ENCODE measurements at regions of chr3 and their contacts with region 1.

Region 1: GRCh38 chr3:173553635-173554280 is 156.2 kb downstream of the NLGN1 start:
- H3K4me3 Mint-ChIP-seq: no peak overlapping the region
- H3K27ac Mint-ChIP-seq: no peak overlapping the region
- H3K4me1 Mint-ChIP-seq: no peaks in the 10 kb centered on the region
- H3K27me3 Mint-ChIP-seq: no peaks in the 10 kb centered on the region

Region 2: DNA sequence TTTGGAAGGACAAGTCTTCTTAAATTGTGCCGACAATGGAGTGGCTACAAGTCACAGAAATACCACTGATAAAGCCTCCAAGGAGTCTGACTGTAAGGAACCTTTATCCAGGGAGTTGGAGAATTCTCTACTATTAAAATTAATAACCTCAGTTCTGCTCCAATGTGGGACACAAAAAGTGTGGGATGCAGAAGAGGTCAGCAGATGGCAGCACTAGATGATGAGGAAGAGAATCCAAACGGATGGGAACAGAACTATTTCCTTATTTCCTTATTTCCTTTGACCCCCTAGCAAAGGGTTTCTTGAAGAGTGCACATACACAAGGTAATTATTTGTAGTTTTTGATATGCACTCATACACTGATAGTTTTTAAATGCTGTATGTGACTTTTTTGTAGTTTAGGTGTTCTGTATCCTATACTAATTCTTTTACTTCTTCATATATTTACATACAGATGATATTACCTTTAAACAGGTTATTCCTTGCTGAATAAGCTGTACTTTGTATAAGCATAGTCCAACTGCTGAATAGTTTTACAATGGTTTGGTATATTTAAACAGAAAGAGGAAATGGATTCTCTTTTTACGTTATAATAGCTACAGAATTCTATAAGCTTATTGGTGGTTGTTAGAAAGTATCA is 181.8 kb before region 1 on chr3:
- intact Hi-C with region 1: loop called (anchors 2 kb)
- H3K4me3 Mint-ChIP-seq: no peak overlapping the region
- H3K27ac Mint-ChIP-seq: no peak overlapping the region
- H3K4me1 Mint-ChIP-seq: no peaks in the 10 kb centered on the region
- H3K27me3 Mint-ChIP-seq: no peaks in the 10 kb centered on the region

Region 3: DNA sequence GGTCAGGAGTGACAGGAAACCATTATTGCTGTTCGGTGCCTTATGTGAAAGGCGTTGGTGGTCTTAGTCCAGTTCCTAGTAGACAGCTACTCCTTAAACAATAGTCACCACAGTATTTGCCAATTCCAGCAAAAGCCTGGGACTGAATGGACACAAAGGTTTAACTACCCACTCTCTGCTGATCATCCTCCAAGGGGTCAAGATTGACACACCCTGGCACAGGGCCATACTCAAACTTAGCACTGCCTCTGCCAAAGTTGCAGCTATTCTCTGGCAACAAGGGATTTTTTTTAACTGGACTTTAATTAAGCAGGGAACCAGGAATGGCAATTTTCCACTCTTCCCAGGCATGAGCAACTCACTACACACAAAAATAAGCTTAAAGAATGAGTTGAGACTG is 37.6 kb after region 1 on chr3:
- intact Hi-C with region 1: no loop called
- H3K4me3 Mint-ChIP-seq: no peak overlapping the region
- H3K27ac Mint-ChIP-seq: no peak overlapping the region
- H3K4me1 Mint-ChIP-seq: no peaks in the 10 kb centered on the region
- H3K27me3 Mint-ChIP-seq: peaks cover under 1% of the 10 kb centered on the region